Activated CD4-positive, alpha-beta memory T cell treated with anti-CD3 and anti-CD28 coated beads for 36 hours (primary cell): ENCODE measurements at regions of chr2 and their contacts with region 1.

Region 1: DNA sequence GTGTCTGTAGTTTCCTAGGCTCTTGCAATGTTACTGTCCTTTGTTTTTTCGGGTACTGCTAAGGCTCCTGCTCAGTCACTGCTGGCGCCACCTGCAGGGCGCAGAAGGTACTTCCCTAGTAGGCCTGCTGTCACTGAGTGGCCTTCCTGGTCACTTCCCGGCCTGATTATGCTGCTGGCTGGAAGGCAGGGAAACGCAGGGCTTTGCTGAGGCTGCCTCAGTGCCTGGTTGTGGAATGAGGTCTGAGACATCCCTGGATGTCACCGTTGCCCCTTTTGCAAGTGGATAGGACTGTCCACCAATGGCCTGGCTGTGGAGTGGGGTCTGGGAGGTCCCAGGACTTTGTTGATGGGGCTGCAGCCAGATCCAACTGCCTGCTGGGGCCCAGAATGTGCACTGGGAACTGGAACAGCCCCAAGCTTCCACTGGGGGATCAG is 13.1 kb downstream of the DAW1 start:
- DNase-seq: peak; percentile 74
- H3K4me3 Mint-ChIP-seq: no peak overlapping the region
- H3K27ac Mint-ChIP-seq: no peak overlapping the region
- H3K4me1 Mint-ChIP-seq: peaks cover 3% of the 10 kb centered on the region
- H3K27me3 Mint-ChIP-seq: peaks cover 2% of the 10 kb centered on the region

Region 2: GRCh38 chr2:227774011-227774624 is 110.4 kb before region 1 on chr2:
- CTCF ChIA-PET with region 1: no interaction called
- POLR2A ChIA-PET with region 1: no interaction called
- intact Hi-C with region 1: loop called (anchors 1 kb)
- DNase-seq: peak; percentile 37
- H3K4me3 Mint-ChIP-seq: no peak overlapping the region
- H3K27ac Mint-ChIP-seq: peak overlapping the region; percentile 50
- H3K4me1 Mint-ChIP-seq: peaks cover 16% of the 10 kb centered on the region
- H3K27me3 Mint-ChIP-seq: no peaks in the 10 kb centered on the region

Region 3: GRCh38 chr2:227826019-227826521 is 58.5 kb before region 1 on chr2:
- CTCF ChIA-PET with region 1: no interaction called
- POLR2A ChIA-PET with region 1: no interaction called
- intact Hi-C with region 1: no loop called
- DNase-seq: peak; percentile 53
- H3K4me3 Mint-ChIP-seq: peak overlapping the region; percentile 17
- H3K27ac Mint-ChIP-seq: peak overlapping the region; percentile 53
- H3K4me1 Mint-ChIP-seq: peaks cover 13% of the 10 kb centered on the region
- H3K27me3 Mint-ChIP-seq: no peaks in the 10 kb centered on the region